WTC11 (cell line): ENCODE measurements at regions of chrX and their contacts with region 1.

Region 1: DNA sequence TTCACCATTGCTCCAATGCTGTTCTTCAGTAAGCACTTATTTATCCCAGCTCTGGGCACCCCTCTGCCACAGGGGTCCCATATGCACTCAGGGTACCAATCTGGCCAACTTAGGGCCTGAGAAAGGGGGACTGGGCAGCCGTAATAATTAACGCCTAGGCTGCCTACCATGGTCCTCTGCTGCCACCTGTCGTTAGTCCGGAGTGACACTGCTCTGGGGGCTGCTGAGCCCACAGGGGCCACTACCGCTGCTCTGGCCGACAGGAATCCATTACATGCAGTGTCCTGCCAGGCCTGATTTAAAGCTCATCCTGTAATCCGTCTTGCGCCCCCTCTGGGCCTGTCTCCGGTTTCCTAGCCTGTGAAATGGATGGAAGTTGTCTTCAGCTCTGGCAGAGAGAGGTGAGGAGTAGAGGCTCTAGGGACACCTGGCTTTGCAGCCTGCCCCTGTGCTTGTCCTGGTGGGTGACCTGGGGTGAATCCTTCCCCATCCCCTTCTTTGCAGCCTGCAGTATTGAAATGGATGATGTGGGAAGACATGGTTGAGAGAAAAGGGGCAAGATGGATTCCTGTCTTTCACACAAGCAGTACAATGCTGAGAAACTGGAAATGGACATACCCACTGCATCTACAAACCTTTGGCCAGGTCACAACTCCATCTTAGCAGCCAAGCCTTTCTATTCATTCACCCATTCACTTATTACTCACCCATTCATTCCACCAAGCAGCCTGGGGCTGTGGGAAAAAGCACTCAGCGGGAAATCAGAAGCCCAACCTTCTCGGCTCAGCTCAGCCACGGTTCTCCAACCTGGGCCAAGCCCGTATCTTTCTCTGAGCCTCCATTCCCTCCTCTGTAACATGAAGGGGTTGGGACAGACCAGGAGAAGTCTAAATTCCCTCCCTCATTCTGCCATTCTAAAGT is 116.3 kb upstream of the NALF2 start:
- DNase-seq: peak; percentile 82
- ATAC-seq: peak; percentile 98
- H3K4me3 Mint-ChIP-seq: no peak overlapping the region
- H3K27ac Mint-ChIP-seq: no peak overlapping the region
- H3K4me1 Mint-ChIP-seq: peaks cover 23% of the 10 kb centered on the region
- H3K27me3 Mint-ChIP-seq: peaks cover 28% of the 10 kb centered on the region
- CTCF ChIP-seq: peak; percentile 63

Region 2: GRCh38 chrX:68822641-68823410 is 565.0 kb before region 1 on chrX:
- CTCF ChIA-PET with region 1: interaction called, 49 read pairs
- POLR2A ChIA-PET with region 1: no interaction called
- DNase-seq: no peak
- ATAC-seq: peak; percentile 96
- H3K4me3 Mint-ChIP-seq: no peak overlapping the region
- H3K27ac Mint-ChIP-seq: no peak overlapping the region
- H3K4me1 Mint-ChIP-seq: 0 out of 2 replicates have a peak, but pooled peaks cover 2% of the 10 kb centered on the region
- H3K27me3 Mint-ChIP-seq: peaks cover 56% of the 10 kb centered on the region
- CTCF ChIP-seq: no peak

Region 3: GRCh38 chrX:69268611-69269010 is 119.2 kb before region 1 on chrX:
- CTCF ChIA-PET with region 1: interaction called, 12 read pairs
- POLR2A ChIA-PET with region 1: no interaction called
- DNase-seq: no peak
- ATAC-seq: no peak
- H3K4me3 Mint-ChIP-seq: no peak overlapping the region
- H3K27ac Mint-ChIP-seq: no peak overlapping the region
- H3K4me1 Mint-ChIP-seq: peaks cover 5% of the 10 kb centered on the region
- H3K27me3 Mint-ChIP-seq: peaks cover 91% of the 10 kb centered on the region
- CTCF ChIP-seq: no peak

Region 4: DNA sequence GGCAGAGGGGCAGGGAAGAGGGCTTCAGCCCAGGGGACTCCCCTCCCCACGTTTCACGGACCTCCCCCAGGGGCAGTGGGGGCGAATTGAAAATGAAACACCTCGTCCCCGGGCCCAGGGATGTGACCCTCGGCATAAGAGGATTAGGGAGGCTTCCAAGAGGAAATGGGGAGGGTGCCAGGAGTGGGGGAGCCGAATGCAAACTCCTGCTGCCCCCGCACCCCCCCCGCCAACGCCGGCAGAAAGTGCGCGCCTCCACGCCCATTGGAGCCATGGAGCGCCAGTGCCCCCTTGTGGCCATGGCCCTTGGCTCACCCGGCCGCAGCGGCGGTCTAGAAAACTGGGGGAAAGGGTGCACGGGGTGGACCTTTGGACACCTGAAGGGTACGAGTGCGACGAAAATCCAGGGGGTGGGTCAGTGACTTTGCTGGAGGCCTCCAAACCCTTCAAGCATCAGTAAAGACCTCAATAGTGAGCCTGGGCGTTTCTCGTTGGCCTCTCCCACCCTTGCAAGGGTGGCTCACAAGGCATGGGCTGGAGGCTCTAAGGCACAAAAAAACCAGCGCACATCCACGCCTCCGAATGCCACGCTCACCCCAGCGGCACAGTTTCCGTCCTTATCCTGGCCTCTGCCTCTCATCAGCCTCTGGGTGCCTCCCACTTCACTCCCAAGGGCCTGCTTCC is 101.8 kb before region 1 on chrX:
- CTCF ChIA-PET with region 1: interaction called, 33 read pairs
- POLR2A ChIA-PET with region 1: interaction called, 3 read pairs
- DNase-seq: peak; percentile 66
- ATAC-seq: peak; percentile 58
- H3K4me3 Mint-ChIP-seq: peak overlapping the region; percentile 61
- H3K27ac Mint-ChIP-seq: no peak overlapping the region
- H3K4me1 Mint-ChIP-seq: peaks cover 19% of the 10 kb centered on the region
- H3K27me3 Mint-ChIP-seq: peaks cover 65% of the 10 kb centered on the region
- CTCF ChIP-seq: peak; percentile 61

Region 5: DNA sequence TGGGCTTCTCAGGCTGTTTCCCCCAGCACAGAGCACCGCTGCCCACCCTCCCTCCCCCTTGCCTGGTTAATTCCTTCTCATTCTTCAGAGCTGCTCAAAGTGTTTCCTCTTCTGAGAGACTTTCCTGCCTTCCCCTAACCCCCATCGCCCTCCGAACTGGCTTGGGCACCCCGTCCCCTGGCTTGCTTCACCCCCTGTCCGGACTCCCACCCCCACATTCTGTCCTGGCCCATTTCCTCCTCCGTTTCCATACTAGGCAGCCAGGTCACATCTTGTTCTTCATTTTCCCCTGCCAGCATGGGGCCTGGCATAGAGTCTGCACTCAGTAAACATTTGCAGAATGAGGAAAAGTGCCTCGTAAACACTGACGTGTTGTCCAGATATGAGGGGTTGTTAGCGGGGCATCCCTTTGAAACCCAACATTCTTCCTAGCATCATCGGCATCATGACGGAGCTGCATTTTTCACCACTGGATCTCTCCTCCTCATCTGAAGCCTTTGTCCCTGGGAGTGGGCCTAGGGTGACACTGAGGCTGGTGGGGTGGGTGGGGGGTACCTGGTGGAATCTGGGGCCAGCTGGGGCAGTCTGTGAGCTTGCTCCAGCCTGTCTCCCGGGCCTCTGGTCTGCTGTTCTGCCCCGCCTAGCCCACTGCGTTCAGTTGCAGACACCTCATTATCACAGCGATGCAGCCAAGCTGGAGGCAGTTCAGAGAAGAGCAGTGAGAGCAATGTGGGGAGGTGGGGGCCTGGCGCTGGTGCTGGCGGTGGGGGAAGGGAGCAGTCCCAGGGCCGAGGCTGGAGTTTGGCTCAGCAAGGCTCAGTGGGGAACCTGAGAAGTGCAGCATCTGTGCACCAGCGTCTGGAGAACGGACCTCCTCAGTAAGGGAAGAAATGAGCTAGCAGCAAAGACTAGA is 73.1 kb before region 1 on chrX:
- CTCF ChIA-PET with region 1: interaction called, 12 read pairs
- POLR2A ChIA-PET with region 1: no interaction called
- DNase-seq: no peak
- ATAC-seq: peak; percentile 37
- H3K4me3 Mint-ChIP-seq: no peak overlapping the region
- H3K27ac Mint-ChIP-seq: no peak overlapping the region
- H3K4me1 Mint-ChIP-seq: peaks cover 49% of the 10 kb centered on the region
- H3K27me3 Mint-ChIP-seq: peaks cover 18% of the 10 kb centered on the region
- CTCF ChIP-seq: no peak

Region 6: GRCh38 chrX:69597399-69597798 is 209.6 kb after region 1 on chrX:
- CTCF ChIA-PET with region 1: no interaction called
- POLR2A ChIA-PET with region 1: no interaction called
- DNase-seq: no peak
- ATAC-seq: no peak
- H3K4me3 Mint-ChIP-seq: no peak overlapping the region
- H3K27ac Mint-ChIP-seq: no peak overlapping the region
- H3K4me1 Mint-ChIP-seq: no peaks in the 10 kb centered on the region
- H3K27me3 Mint-ChIP-seq: peaks cover 13% of the 10 kb centered on the region
- CTCF ChIP-seq: no peak